ENCODE measurements at regions of chr12 and their contacts with region 1.

Region 1: GRCh38 chr12:9049520-9050133 is 60.3 kb downstream of the KLRG1 start:
- H3K4me3 Mint-ChIP-seq: no peak overlapping the region
- H3K27ac Mint-ChIP-seq: no peak overlapping the region
- H3K4me1 Mint-ChIP-seq: peaks cover 23% of the 10 kb centered on the region
- H3K27me3 Mint-ChIP-seq: peaks cover 8% of the 10 kb centered on the region

Region 2: GRCh38 chr12:8687846-8688601 is 361.6 kb before region 1 on chr12:
- intact Hi-C with region 1: loop called (anchors 2 kb)
- H3K4me3 Mint-ChIP-seq: no peak overlapping the region
- H3K27ac Mint-ChIP-seq: no peak overlapping the region
- H3K4me1 Mint-ChIP-seq: peaks cover 6% of the 10 kb centered on the region
- H3K27me3 Mint-ChIP-seq: peaks cover 2% of the 10 kb centered on the region

Region 3: DNA sequence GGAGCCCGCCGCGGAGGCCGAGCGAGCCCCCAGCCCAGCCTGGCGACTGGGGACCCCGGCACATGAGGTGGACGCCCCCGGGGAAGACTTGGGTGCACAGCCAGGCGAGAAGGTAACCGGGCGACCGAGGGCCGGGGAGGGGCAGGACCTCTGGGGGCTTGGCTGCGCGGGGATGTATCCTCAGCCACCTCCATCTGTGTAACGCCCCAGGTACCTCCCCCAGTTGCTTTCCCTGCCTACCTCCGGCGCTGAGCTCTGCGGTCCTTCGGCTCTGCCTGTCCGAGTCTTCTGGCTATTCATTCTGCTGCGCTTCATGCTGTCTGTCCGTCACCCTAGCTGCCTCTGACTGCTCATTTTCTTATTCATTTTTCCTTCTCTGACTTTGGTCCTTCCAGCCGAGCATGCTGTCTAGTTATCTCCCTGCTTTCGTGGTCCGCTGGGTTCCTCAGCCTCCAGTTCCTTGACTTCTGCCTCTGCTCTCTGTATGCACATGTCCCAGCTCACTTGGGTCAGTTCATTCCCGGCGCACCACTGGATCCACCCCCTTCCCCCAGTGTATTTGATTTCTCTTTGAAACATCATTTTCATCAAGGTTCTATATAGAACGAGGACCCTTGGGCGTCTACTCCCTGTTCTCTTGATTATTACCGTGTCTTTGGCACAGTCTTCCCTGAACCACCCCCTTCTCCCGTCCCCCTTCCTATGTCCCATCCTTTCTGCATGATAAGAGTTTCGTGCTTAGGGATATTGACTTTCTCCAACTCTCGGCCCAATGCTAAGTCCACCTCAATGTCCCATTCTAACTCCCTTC is 134.7 kb before region 1 on chr12:
- intact Hi-C with region 1: loop called (anchors 10 kb)
- H3K4me3 Mint-ChIP-seq: no peak overlapping the region
- H3K27ac Mint-ChIP-seq: no peak overlapping the region
- H3K4me1 Mint-ChIP-seq: peaks cover 12% of the 10 kb centered on the region
- H3K27me3 Mint-ChIP-seq: peaks cover 11% of the 10 kb centered on the region

Measured in dendritic cell treated with granulocyte-macrophage colony-stimulating factor and Interleukin-4, amounts not matched to agents 40 ng/mL and 50 ng/mL, for 4 days (primary cell).